GM10248 (cell line): ENCODE measurements at regions of chr17 and their contacts with region 1.

Region 1: GRCh38 chr17:48878918-48879898 is 13.4 kb upstream of the ATP5MC1 start:
- DNase-seq: peak; percentile 83
- CTCF ChIP-seq: peak; percentile 90

Region 2: DNA sequence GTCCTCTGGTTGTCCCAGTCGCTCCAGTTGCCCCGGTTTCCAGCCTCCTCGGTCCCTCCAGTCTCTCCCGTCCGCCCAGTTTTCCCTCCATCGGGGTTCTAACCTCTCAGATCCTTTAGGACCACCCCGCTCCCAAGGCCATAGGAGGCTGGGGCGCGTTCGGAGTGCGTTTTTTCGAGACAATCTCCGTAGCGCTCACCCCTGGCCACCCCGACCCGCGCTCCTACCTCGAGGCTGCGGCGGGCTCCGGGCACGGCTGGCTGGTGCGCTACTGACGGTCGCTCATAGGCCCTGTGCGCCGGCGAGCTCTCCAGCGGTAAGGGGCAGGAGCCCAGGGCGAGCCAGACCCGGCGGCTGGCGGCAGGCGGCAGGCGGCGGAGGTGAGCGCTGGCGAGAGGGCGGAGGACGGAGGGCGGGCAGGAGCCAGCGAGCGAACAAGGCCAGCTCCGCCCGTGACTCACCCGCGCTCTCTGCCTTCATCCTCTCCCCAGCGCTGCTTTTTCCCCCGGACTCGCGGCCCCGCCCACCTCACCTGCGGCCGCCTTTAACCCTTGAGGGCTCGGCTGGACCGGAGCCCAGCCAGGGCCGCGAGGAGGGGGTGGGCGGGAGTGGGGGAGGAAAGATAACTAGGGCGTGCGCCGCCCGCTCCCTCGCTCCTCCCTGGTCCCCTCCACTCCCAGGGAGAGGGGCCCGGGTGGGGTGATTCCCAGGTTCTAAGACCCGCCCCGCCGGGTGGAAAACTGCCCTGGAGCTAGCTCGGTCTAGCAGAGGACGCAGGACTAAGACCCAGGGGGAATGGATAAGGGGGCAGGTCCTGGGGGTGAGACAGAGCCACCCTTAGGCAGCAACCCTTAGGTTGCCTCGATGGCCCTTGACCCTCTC is 1028.3 kb before region 1 on chr17 and contains the start of gene SP6:
- CTCF ChIA-PET with region 1: no interaction called
- POLR2A ChIA-PET with region 1: no interaction called
- DNase-seq: peak; percentile 70
- CTCF ChIP-seq: peak; percentile 5

Region 3: GRCh38 chr17:48646183-48647102 is 232.8 kb before region 1 on chr17:
- CTCF ChIA-PET with region 1: no interaction called
- POLR2A ChIA-PET with region 1: no interaction called
- DNase-seq: peak; percentile 67
- CTCF ChIP-seq: no peak

Region 4: GRCh38 chr17:48671697-48672171 is 207.5 kb before region 1 on chr17:
- CTCF ChIA-PET with region 1: interaction called, 22 read pairs
- POLR2A ChIA-PET with region 1: no interaction called
- DNase-seq: peak; percentile 69
- CTCF ChIP-seq: peak; percentile 84

Region 5: GRCh38 chr17:48724251-48725003 is 154.8 kb before region 1 on chr17:
- CTCF ChIA-PET with region 1: interaction called, 166 read pairs
- POLR2A ChIA-PET with region 1: no interaction called
- DNase-seq: peak; percentile 71
- CTCF ChIP-seq: peak; percentile 82

Region 6: GRCh38 chr17:48816774-48817590 is 62.2 kb before region 1 on chr17 and contains the start of gene TTLL6:
- CTCF ChIA-PET with region 1: interaction called, 770 read pairs
- POLR2A ChIA-PET with region 1: no interaction called
- DNase-seq: peak; percentile 74
- CTCF ChIP-seq: no peak

Region 7: DNA sequence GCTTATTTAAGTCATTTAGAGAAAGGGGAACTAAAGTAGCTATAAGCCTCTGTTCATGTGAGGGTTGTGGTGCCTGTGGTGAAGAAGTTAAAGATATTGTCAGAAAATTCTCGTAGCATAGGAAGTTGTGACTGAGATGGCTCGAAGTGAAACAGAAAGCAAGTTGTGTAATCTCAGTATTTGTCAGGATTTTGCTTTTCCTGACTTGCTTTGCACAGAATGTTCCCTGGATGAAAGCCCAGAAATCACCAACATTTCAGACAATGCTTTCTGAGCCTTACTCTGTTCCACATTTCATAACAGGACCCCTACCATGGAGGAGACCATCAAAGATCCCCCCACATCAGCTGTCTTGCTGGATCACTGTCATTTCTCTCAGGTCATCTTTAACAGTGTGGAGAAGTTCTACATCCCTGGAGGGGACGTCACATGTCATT is 37.8 kb before region 1 on chr17:
- CTCF ChIA-PET with region 1: interaction called, 42 read pairs
- POLR2A ChIA-PET with region 1: no interaction called
- DNase-seq: peak; percentile 72
- CTCF ChIP-seq: no peak

Region 8: GRCh38 chr17:48892940-48893645 is 13.9 kb after region 1 on chr17:
- CTCF ChIA-PET with region 1: interaction called, 48 read pairs
- POLR2A ChIA-PET with region 1: interaction called, 3 read pairs
- DNase-seq: no peak
- CTCF ChIP-seq: no peak